Lower leg skin (tissue), 4 donors: ENCODE measurements at regions of chr12 and their contacts with region 1.

Region 1: GRCh38 chr12:50055831-50056638 is 1.4 kb upstream of the ASIC1 start:
- DNase-seq: no peak
- H3K4me3 ChIP-seq: no peak overlapping the region
- CTCF ChIP-seq: peak in 1 of 3 donors; percentile 76
- POLR2A ChIP-seq: no peak

Region 2: DNA sequence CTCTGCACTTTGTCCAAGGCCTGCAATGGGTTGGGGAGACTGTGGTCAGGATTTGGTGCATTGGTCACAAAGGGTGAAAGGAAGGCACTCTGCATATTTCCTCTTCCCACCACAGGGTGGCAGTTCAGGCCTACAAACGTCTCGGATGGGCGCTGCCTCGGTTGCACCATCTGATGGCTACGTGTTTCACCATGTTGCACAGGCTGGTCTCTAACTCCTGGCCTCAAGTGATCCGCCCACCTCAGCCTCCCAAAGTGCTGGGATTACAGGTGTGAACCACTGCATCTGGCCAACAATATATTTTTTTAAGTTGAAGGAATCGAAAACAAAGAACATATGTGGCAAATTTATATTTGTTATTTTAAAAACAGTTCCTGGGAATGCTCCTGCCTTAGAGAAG is 279.6 kb before region 1 on chr12:
- intact Hi-C with region 1: loop called (anchors 10 kb)
- DNase-seq: peak; percentile 59 to 91
- H3K4me3 ChIP-seq: no peak overlapping the region
- CTCF ChIP-seq: peak in 1 of 3 donors; percentile 80
- POLR2A ChIP-seq: no peak

Region 3: DNA sequence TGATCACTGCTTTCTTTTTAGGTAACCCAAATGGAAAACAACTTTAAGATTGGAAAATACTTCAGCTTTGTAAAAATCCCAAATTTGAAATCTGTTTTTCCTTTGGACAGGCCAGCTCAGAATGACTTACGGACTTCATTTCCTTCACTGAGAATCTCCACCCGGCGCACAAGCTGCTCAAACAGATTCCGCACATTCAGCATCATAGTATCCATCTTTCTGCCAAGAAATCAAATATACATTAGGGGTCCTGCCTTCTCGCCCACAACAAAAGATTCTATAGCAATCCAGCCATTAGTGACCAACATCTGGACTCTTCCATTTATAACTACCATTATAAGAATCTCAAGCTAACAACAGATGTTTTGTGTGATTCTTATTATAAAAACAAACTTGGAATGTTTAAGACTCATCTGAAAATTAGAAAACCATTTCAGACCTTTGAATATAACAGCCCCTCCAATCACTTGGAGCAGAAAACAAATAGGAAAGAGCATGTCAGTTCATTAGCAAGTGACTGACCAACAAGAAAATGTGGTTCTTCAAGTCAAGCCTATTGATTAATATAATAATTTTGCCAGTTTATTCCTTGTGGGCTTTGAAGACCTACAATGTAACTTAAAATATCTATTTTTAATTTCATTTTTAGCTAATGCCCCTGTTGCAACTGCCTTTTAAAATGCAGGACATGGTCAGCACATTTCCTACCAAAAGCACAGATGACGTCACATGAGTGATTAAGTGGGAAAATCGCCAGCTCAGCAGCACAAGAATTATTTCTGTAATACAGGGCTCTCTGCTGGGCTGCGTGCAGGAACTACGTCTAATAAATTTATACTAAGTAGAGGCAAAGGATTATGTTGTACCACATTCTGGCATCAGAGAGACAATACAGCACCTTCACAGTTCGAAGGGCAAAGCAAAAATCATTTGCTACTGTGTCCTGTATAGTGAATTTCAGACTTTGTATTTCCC is 39.2 kb before region 1 on chr12:
- intact Hi-C with region 1: no loop called
- DNase-seq: peak; percentile 62 to 87
- H3K4me3 ChIP-seq: no peak overlapping the region
- CTCF ChIP-seq: no peak
- POLR2A ChIP-seq: no peak